ENCODE measurements at regions of chr12 and their contacts with region 1.

Region 1: GRCh38 chr12:18643681-18644080 is 94.1 kb downstream of the PLCZ1 start:
- DNase-seq: no peak

Region 2: GRCh38 chr12:19058235-19059021 is 414.7 kb after region 1 on chr12:
- CTCF ChIA-PET with region 1: interaction called, 10 read pairs
- POLR2A ChIA-PET with region 1: no interaction called
- DNase-seq: no peak

Measured in HEK293T (cell line).